ENCODE measurements at regions of chr19 and their contacts with region 1.

Region 1: GRCh38 chr19:383922-384798 is 24.8 kb downstream of the C2CD4C start:
- DNase-seq: peak; percentile 84
- H3K4me3 ChIP-seq: no peak overlapping the region
- H3K27ac ChIP-seq: no peak overlapping the region
- H3K4me1 ChIP-seq: no peaks in the 10 kb centered on the region
- H3K27me3 ChIP-seq: no peaks in the 10 kb centered on the region
- CTCF ChIP-seq: peak; percentile 23; the same call in 1 of the 2 replicates
- EP300 ChIP-seq: no peak
- RAD21 ChIP-seq: peak; percentile 66

Region 2: GRCh38 chr19:372306-372890 is 11.8 kb before region 1 on chr19:
- CTCF ChIA-PET with region 1: interaction called, 10 read pairs
- POLR2A ChIA-PET with region 1: no interaction called
- DNase-seq: peak; percentile 81
- H3K4me3 ChIP-seq: no peak overlapping the region
- H3K27ac ChIP-seq: peak overlapping the region in 1 of 2 experiments; percentile 65; a peak in 2 of 4 replicates
- H3K4me1 ChIP-seq: peaks cover 0 to 15% of the 10 kb centered on the region in 2 experiments; a peak in 1 of 4 replicates
- H3K27me3 ChIP-seq: no peaks in the 10 kb centered on the region; the same call in 1 of the 2 replicates
- CTCF ChIP-seq: no peak
- EP300 ChIP-seq: no peak
- RAD21 ChIP-seq: no peak

Measured in SK-N-SH (cell line).